Naive thymus-derived CD8-positive, alpha-beta T cell (primary cell): ENCODE measurements at regions of chr3 and their contacts with region 1.

Region 1: DNA sequence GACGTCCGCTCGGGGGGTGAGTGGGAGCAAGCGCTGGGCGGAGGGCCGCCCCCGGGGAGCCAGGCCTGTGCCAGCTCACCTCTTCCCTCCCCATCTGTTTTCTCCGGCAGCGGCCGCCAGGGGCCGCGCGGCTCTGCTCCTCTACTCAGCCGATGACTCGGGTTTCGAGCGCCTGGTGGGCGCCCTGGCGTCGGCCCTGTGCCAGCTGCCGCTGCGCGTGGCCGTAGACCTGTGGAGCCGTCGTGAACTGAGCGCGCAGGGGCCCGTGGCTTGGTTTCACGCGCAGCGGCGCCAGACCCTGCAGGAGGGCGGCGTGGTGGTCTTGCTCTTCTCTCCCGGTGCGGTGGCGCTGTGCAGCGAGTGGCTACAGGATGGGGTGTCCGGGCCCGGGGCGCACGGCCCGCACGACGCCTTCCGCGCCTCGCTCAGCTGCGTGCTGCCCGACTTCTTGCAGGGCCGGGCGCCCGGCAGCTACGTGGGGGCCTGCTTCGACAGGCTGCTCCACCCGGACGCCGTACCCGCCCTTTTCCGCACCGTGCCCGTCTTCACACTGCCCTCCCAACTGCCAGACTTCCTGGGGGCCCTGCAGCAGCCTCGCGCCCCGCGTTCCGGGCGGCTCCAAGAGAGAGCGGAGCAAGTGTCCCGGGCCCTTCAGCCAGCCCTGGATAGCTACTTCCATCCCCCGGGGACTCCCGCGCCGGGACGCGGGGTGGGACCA is 632 bp upstream of the CRELD1 start:
- DNase-seq: peak; percentile 80 to 94 (median 86)
- ATAC-seq: peak; percentile 61 to 69
- H3K4me3 Mint-ChIP-seq: peak overlapping the region; percentile 94 to 99 (median 98)
- H3K27ac Mint-ChIP-seq: peak overlapping the region; percentile 96 to 100 (median 99)
- H3K4me1 Mint-ChIP-seq: peaks cover 24 to 53% (median 45%) of the 10 kb centered on the region in 4 donors
- H3K27me3 Mint-ChIP-seq: no peaks in the 10 kb centered on the region

Region 2: DNA sequence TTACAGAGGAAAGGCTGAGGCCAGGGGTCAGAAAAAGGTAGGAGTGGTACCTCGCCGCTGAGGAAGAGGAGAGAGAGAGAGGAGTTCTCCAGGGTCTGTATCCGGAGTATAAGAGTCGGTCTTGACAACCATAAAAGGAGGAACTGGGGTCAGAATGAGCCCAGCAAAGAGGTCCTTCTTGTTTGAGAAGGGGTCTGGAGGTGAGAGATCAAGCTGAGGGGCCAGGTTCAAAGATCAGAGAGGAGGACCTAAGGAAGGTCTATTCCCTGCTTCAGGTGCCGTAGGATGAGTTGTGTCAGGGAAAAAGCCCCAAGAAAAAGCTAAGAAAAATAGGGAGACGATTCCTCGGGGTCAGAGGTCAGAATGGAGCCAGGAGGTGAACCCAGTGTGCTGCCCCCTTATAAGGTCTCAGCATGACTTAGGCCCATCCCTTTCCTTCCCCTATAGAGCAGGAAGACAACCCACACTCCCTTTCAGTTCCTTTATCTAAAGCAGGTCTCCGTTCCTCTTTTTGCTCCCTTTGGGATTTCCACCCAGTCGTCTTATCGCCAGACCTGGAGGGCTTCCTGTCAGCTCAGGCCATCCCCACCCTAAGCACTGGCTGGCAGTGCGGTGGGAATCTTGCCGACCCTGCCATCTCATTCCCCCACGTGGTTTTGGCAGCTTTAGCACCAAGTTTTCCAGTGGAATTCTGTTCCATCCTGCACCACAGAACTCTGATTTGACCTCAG is 283.0 kb before region 1 on chr3:
- POLR2A ChIA-PET with region 1: interaction called, 10 read pairs
- DNase-seq: peak in 1 of 10 donors; percentile 7
- ATAC-seq: no peak
- H3K4me3 Mint-ChIP-seq: peak overlapping the region; percentile 80 to 99 (median 94)
- H3K27ac Mint-ChIP-seq: peak overlapping the region; percentile 88 to 98 (median 94)
- H3K4me1 Mint-ChIP-seq: peaks cover 18 to 51% (median 42%) of the 10 kb centered on the region in 4 donors
- H3K27me3 Mint-ChIP-seq: no peaks in the 10 kb centered on the region

Region 3: DNA sequence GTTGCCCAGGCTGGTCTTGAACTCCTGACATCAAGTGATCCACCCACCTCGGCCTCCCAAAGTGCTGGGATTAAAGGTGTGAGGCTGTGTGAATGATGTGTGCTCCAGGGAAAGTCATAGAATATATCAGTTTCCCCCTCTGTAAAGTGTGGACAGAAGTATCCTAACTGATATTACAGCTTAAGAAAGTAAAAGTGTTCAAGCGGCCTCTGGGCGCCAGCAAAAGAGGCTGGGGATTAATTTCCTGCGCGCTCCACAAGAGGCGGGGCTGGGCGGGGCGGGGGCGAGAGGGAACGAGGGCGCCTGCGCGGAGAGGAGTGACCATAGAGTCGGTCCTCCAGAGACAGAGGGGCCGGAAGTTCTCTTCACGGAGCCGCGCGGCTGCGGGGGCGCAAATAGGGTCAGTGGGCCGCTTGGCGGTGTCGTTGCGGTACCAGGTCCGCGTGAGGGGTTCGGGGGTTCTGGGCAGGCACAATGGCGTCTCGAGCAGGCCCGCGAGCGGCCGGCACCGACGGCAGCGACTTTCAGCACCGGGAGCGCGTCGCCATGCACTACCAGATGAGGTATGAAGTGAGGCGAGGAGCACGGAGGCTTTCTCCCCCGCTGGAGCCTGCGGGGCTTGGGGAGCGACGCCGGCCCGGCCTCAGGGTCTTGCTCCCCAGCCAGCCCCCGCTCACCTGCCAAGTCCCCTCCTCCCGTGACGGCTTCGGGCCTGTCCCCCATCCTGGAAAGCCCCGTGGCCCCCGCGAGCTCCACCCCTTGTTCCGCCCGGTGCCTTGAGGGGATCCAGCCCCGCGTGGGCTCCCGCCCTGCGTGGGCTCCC is 42.5 kb before region 1 on chr3 and contains the start of gene JAGN1:
- POLR2A ChIA-PET with region 1: interaction called, 52 read pairs
- DNase-seq: peak; percentile 83 to 95 (median 90)
- ATAC-seq: peak; percentile 89 to 92
- H3K4me3 Mint-ChIP-seq: peak within 1 kb of the TSS; percentile 93 to 99 (median 96)
- H3K27ac Mint-ChIP-seq: peak within 1 kb of the TSS; percentile 94 to 100 (median 100)
- H3K4me1 Mint-ChIP-seq: peaks cover 20 to 42% (median 39%) of the 10 kb centered on the region in 4 donors
- H3K27me3 Mint-ChIP-seq: no peaks in the 10 kb centered on the region
- polyA plus RNA-seq, gene JAGN1: 38.4 to 48.5 (median 39.8) TPM

Region 4: GRCh38 chr3:9946112-9947024 is 13.4 kb after region 1 on chr3:
- POLR2A ChIA-PET with region 1: interaction called, 73 read pairs
- DNase-seq: peak; percentile 62 to 87 (median 79)
- ATAC-seq: peak; percentile 92 to 96
- H3K4me3 Mint-ChIP-seq: peak overlapping the region; percentile 71 to 87 (median 81)
- H3K27ac Mint-ChIP-seq: peak overlapping the region; percentile 64 to 93 (median 85)
- H3K4me1 Mint-ChIP-seq: peaks cover 4 to 16% (median 12%) of the 10 kb centered on the region in 4 donors
- H3K27me3 Mint-ChIP-seq: no peaks in the 10 kb centered on the region

Region 5: DNA sequence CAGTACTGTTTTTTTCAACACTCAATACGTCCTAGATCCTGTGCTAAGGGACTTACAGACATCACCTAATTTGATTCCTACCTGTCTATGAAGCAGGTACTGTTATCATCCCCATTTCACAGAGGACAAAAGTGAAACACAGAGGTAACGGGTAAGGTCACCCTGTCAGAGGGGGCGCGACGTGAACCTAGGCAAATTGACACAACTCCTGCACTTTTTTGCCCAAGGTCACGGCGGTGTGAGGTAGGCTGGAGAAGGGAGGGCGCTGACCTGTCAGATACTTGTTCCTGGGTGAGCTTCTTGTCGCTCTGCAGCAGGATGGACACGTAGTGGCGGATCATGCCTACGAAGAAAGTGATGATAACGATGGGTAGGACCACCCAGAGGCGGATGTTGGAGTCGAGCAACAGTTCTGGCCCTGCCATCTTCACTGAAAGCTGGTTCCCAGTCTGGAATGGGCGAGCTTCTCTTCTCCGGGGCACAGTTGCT is 53.3 kb after region 1 on chr3:
- POLR2A ChIA-PET with region 1: interaction called, 26 read pairs
- DNase-seq: no peak
- ATAC-seq: peak; percentile 61 to 66
- H3K4me3 Mint-ChIP-seq: peak overlapping the region; percentile 91 to 98 (median 96)
- H3K27ac Mint-ChIP-seq: peak overlapping the region; percentile 92 to 100 (median 99)
- H3K4me1 Mint-ChIP-seq: peaks cover 7 to 46% (median 32%) of the 10 kb centered on the region in 4 donors
- H3K27me3 Mint-ChIP-seq: peaks cover 0 to 2% (median 0%) of the 10 kb centered on the region in 5 donors

Region 6: GRCh38 chr3:10142707-10143566 is 209.9 kb after region 1 on chr3:
- POLR2A ChIA-PET with region 1: interaction called, 24 read pairs
- DNase-seq: no peak
- ATAC-seq: no peak
- H3K4me3 Mint-ChIP-seq: peak overlapping the region; percentile 83 to 94 (median 92)
- H3K27ac Mint-ChIP-seq: peak overlapping the region; percentile 82 to 98 (median 94)
- H3K4me1 Mint-ChIP-seq: peaks cover 15 to 51% (median 38%) of the 10 kb centered on the region in 4 donors
- H3K27me3 Mint-ChIP-seq: no peaks in the 10 kb centered on the region

Region 7: GRCh38 chr3:10319804-10320677 is 387.0 kb after region 1 on chr3:
- POLR2A ChIA-PET with region 1: interaction called, 11 read pairs
- DNase-seq: no peak
- ATAC-seq: no peak
- H3K4me3 Mint-ChIP-seq: peak overlapping the region; percentile 81 to 94 (median 90)
- H3K27ac Mint-ChIP-seq: peak overlapping the region; percentile 82 to 98 (median 96)
- H3K4me1 Mint-ChIP-seq: peaks cover 8 to 34% (median 31%) of the 10 kb centered on the region in 4 donors
- H3K27me3 Mint-ChIP-seq: peaks cover 0 to 12% (median under 1%) of the 10 kb centered on the region in 5 donors